SK-N-SH (cell line): ENCODE measurements at regions of chr11 and their contacts with region 1.

Region 1: DNA sequence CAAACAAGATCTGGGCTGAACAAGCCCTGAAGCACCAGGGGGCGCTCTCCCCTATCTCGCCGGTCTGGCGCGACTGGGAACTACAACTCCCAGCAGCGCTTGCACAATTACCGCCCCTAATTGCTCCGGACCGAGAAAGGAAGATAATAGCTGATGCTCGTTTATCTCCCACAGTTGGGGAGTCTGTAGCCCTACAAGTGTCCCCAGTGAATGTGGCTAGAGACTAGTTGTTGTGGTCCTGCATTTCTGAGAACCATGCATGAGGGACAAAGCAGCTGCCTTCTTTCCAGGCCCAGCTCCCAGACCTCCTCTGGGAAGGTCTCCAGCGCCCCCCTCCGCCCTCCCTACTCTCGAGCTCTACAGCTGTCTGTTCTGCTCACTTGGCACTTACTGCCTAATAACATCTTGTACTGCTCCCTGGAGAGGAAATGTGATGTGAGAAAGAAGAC is 34.4 kb downstream of the NRXN2 start:
- DNase-seq: peak; percentile 90
- H3K4me3 ChIP-seq: peak overlapping the region; percentile 47 to 50; a peak in 3 of 4 replicates
- H3K27ac ChIP-seq: peak overlapping the region in 1 of 2 experiments; percentile 96; a peak in 2 of 4 replicates
- H3K4me1 ChIP-seq: peaks cover 0 to 34% of the 10 kb centered on the region in 2 experiments; a peak in 2 of 4 replicates
- H3K27me3 ChIP-seq: peaks cover 13% of the 10 kb centered on the region; the same call in 1 of the 2 replicates
- CTCF ChIP-seq: peak; percentile 94
- EP300 ChIP-seq: no peak; a peak in 1 of 4 replicates
- RAD21 ChIP-seq: peak; percentile 81

Region 2: GRCh38 chr11:64667154-64667745 is 21.3 kb before region 1 on chr11:
- CTCF ChIA-PET with region 1: interaction called, 16 read pairs
- POLR2A ChIA-PET with region 1: no interaction called
- DNase-seq: no peak
- H3K4me3 ChIP-seq: no peak overlapping the region
- H3K27ac ChIP-seq: no peak overlapping the region
- H3K4me1 ChIP-seq: no peaks in the 10 kb centered on the region
- H3K27me3 ChIP-seq: peaks cover 15% of the 10 kb centered on the region
- CTCF ChIP-seq: no peak
- EP300 ChIP-seq: no peak
- RAD21 ChIP-seq: no peak

Region 3: DNA sequence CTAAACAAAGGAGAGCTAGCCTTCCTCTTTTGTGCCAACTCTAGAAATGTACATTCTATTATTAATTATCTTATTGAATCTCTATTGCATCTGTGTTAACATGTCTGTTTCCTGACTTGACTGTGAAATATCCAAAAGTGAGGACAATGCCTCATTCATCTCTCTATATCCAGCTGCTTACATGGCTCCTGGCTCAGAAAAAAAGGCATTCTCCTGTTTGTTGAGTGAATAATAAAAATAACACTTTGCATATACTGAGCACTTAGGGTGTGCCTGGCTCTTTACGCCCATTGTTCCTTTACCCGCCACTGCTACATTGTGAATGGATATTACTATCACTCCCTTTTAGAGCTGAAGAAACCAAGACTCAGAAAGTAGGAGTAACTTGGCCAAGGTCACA is 14.5 kb after region 1 on chr11:
- CTCF ChIA-PET with region 1: interaction called, 37 read pairs
- POLR2A ChIA-PET with region 1: interaction called, 3 read pairs
- DNase-seq: no peak
- H3K4me3 ChIP-seq: no peak overlapping the region
- H3K27ac ChIP-seq: no peak overlapping the region
- H3K4me1 ChIP-seq: peaks cover 0 to 6% of the 10 kb centered on the region in 2 experiments; a peak in 2 of 4 replicates
- H3K27me3 ChIP-seq: peaks cover 17% of the 10 kb centered on the region; the same call in 1 of the 2 replicates
- CTCF ChIP-seq: no peak
- EP300 ChIP-seq: no peak
- RAD21 ChIP-seq: no peak

Region 4: DNA sequence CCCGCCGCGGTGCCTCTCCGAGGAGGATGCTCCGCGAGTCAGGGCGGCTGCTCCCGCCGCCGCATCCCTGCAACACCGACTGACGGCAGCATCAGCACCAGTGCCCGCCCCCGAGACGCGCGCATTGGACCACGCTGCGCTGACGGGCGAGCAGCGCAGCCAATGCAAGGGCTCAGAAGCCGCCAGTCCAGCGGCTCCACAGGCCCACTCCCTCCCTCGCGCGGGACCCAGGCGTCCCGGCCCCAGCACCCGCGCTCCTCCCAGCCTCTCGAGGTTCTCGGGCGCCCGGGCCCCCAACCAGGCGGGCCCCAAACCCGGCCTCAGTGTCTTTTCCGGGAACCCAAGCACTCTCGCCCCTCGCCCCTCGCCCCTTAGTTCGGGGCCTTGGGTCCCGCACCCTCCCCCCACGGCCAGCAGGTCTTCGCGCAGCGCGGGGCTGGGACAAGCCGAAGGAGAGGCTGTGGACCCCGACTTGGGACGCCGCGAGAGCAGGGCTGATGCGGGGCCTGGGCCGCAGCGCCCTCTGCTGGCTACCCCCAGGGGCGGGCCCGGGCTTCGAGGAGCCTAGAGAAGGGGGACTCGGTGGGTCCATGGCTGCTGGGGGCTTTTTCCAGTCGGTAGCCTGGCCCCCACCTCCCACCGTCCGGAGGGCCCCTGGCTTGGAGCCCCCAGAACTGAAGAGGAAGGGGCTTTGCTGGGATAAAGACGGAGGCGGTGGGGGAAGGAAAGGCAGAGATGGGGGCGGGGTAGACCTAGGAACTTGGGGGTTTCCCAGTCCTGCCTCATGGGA is 34.8 kb after region 1 on chr11 and contains the start of gene NRXN2:
- CTCF ChIA-PET with region 1: interaction called, 68 read pairs
- POLR2A ChIA-PET with region 1: interaction called, 6 read pairs
- DNase-seq: peak; percentile 97
- H3K4me3 ChIP-seq: peak within 1 kb of the TSS; percentile 67 to 93
- H3K27ac ChIP-seq: peak within 1 kb of the TSS in 1 of 2 experiments; percentile 76; a peak in 2 of 4 replicates
- H3K4me1 ChIP-seq: peaks cover 0 to 34% of the 10 kb centered on the region in 2 experiments; a peak in 1 of 4 replicates
- H3K27me3 ChIP-seq: peaks cover under 1% of the 10 kb centered on the region; the same call in 1 of the 2 replicates
- CTCF ChIP-seq: peak; percentile 98
- EP300 ChIP-seq: no peak
- RAD21 ChIP-seq: peak; percentile 72
- polyA plus RNA-seq, gene NRXN2: 0.15 TPM in 2 replicates

Region 5: DNA sequence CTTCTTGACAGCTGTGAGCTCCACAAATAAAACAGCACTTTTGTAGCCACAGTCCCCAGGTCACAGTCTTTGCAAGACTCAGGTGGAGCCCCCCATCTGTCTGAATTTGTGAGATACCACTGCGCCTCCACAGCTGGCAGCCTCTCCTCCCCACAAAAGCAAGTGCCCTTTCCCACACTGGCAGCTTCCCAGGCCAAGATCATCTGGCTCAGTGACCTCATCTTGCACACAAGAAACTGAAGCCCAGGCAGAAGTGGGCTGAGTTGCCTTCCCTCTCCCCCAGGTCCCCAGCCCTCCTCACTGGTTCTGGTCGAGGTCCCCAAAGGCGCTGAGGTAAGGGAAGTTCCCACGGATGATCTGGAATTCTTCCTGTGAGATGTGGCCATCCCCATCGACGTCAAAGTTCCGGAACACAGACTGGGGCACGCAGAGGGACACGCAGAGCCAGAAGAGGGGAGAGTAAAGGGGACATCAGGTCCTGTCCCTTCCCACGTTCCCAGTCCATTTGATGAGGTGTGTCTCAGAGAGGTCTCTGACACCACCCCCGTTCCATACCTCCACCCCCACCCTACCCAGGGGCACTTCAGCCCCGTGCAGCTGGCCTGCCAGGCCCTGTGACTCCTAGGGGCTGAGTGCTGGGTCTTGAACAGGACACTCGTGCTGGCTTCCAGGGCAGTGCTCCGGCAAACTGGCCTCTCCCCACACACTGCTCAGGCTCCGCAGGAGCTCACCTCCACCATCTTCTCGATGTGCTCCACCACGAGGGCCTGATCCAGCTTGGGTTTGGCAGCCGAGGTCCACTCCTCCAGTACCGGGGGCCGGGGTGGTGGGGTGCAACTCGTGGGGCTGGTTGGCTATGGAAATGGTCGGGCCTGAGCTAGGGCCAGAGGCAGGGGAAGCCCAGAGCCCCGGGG is 46.5 kb after region 1 on chr11:
- CTCF ChIA-PET with region 1: interaction called, 14 read pairs
- POLR2A ChIA-PET with region 1: no interaction called
- DNase-seq: no peak
- H3K4me3 ChIP-seq: no peak overlapping the region
- H3K27ac ChIP-seq: no peak overlapping the region
- H3K4me1 ChIP-seq: no peaks in the 10 kb centered on the region; a peak in 1 of 4 replicates
- H3K27me3 ChIP-seq: no peaks in the 10 kb centered on the region
- CTCF ChIP-seq: no peak
- EP300 ChIP-seq: no peak
- RAD21 ChIP-seq: no peak

Region 6: GRCh38 chr11:64767344-64768299 is 79.1 kb after region 1 on chr11:
- CTCF ChIA-PET with region 1: interaction called, 14 read pairs
- POLR2A ChIA-PET with region 1: no interaction called
- DNase-seq: peak; percentile 76
- H3K4me3 ChIP-seq: no peak overlapping the region; a peak in 1 of 4 replicates
- H3K27ac ChIP-seq: no peak overlapping the region; a peak in 1 of 4 replicates
- H3K4me1 ChIP-seq: peaks cover 11 to 19% of the 10 kb centered on the region in 2 experiments; a peak in 3 of 4 replicates
- H3K27me3 ChIP-seq: no peaks in the 10 kb centered on the region
- CTCF ChIP-seq: peak; percentile 83
- EP300 ChIP-seq: no peak
- RAD21 ChIP-seq: peak; percentile 45

Region 7: DNA sequence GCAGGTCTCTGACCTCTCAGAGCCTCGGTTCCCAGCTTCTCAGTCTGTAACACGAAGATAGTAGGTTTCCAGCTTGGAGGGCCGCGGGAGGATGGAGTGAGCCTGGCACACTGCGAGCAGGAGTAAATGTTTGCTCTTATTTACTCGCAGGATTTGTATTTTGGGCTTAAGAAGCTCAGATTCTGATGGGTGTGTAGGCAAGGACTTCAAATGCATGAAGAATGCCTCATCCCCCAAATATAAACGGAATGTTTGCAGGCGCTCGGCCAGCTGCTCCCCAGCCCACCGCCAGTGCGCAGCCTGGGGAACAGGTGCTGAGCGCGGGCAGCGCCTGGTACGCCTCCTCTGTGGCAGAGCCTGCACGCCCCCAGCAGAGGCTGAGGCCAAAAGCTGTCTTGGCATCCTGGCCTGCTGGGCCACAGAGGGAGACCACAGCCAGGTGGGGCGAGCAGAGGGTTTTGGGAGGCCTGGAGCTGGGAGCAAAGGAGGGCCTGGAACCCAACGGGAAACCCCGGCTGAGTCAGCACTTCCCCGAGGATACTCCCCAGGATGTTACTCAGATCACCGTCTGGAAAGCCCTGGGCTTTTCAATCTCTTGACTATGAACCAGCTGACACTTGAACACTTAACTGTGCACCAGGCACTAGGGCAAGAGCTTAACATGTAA is 180.5 kb after region 1 on chr11:
- CTCF ChIA-PET with region 1: no interaction called
- POLR2A ChIA-PET with region 1: no interaction called
- DNase-seq: no peak
- H3K4me3 ChIP-seq: peak overlapping the region in 1 of 2 experiments; percentile 13; a peak in 1 of 4 replicates
- H3K27ac ChIP-seq: peak overlapping the region in 1 of 2 experiments; percentile 58; a peak in 2 of 4 replicates
- H3K4me1 ChIP-seq: peaks cover 6 to 28% of the 10 kb centered on the region in 2 experiments; a peak in 3 of 4 replicates
- H3K27me3 ChIP-seq: no peaks in the 10 kb centered on the region
- CTCF ChIP-seq: no peak
- EP300 ChIP-seq: 0 out of 4 replicates have a peak, but pooled peaks of 1 of the 2 experiments have one; percentile 28
- RAD21 ChIP-seq: no peak